ENCODE measurements at regions of chr2 and their contacts with region 1.

Region 1: DNA sequence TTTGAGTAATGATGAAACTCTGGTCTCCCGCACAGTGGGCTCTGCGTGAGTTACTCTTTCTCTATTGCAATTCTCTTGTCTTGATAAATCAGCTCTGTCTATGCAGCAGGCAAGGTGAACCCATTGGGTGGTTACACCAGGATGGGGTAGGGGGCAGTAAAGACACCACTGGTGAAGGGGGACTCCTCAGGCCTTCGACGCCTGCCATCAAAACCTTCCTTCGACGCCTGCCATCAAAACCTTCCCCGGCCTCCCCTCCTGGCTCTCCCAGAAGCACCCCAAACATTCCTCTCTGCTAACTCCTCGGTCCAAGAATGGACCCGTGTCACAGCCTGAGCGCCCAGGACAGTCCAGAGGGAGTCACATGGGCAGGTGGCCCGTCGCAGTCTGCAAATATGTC is 4.8 kb upstream of the STARD7 start:
- DNase-seq: no peak
- ATAC-seq: no peak
- H3K4me3 ChIP-seq: no peak overlapping the region
- H3K27ac ChIP-seq: no peak overlapping the region
- H3K4me1 ChIP-seq: peaks cover 20% of the 10 kb centered on the region
- H3K27me3 ChIP-seq: no peaks in the 10 kb centered on the region
- CTCF ChIP-seq: no peak

Region 2: GRCh38 chr2:96251721-96252292 is 38.4 kb after region 1 on chr2:
- intact Hi-C with region 1: loop called in 1 of 2 experiments (anchors 5 kb)
- DNase-seq: peak; percentile 85 to 91
- ATAC-seq: peak; percentile 95 to 97 (median 96)
- H3K4me3 ChIP-seq: peak overlapping the region; percentile 45
- H3K27ac ChIP-seq: peak overlapping the region; percentile 97
- H3K4me1 ChIP-seq: peaks cover 84% of the 10 kb centered on the region
- H3K27me3 ChIP-seq: no peaks in the 10 kb centered on the region
- CTCF ChIP-seq: no peak